Left ventricle myocardium inferior (tissue), 1 donor: ENCODE measurements at regions of chr5 and their contacts with region 1.

Region 1: GRCh38 chr5:79020861-79021561 is 35.9 kb upstream of the ARSB start:
- DNase-seq: peak; percentile 29
- H3K4me3 ChIP-seq: peak overlapping the region; percentile 34
- H3K27ac ChIP-seq: no peak overlapping the region
- H3K4me1 ChIP-seq: peaks cover 11% of the 10 kb centered on the region
- H3K27me3 ChIP-seq: peaks cover 6% of the 10 kb centered on the region
- CTCF ChIP-seq: peak; percentile 86

Region 2: GRCh38 chr5:78574731-78575161 is 446.3 kb before region 1 on chr5:
- intact Hi-C with region 1: no loop called
- DNase-seq: no peak
- H3K4me3 ChIP-seq: no peak overlapping the region
- H3K27ac ChIP-seq: peak overlapping the region; percentile 21
- H3K4me1 ChIP-seq: peaks cover 53% of the 10 kb centered on the region
- H3K27me3 ChIP-seq: no peaks in the 10 kb centered on the region
- CTCF ChIP-seq: no peak

Region 3: GRCh38 chr5:78896132-78896531 is 124.9 kb before region 1 on chr5:
- intact Hi-C with region 1: no loop called
- DNase-seq: no peak
- H3K4me3 ChIP-seq: no peak overlapping the region
- H3K27ac ChIP-seq: no peak overlapping the region
- H3K4me1 ChIP-seq: peaks cover 8% of the 10 kb centered on the region
- H3K27me3 ChIP-seq: no peaks in the 10 kb centered on the region
- CTCF ChIP-seq: no peak

Region 4: GRCh38 chr5:79109527-79110492 is 88.8 kb after region 1 on chr5:
- intact Hi-C with region 1: loop called (anchors 5 kb)
- DNase-seq: peak; percentile 23
- H3K4me3 ChIP-seq: no peak overlapping the region
- H3K27ac ChIP-seq: no peak overlapping the region
- H3K4me1 ChIP-seq: peaks cover 18% of the 10 kb centered on the region
- H3K27me3 ChIP-seq: peaks cover 91% of the 10 kb centered on the region
- CTCF ChIP-seq: peak; percentile 67

Region 5: GRCh38 chr5:79430196-79430595 is 409.2 kb after region 1 on chr5:
- intact Hi-C with region 1: no loop called
- DNase-seq: no peak
- H3K4me3 ChIP-seq: no peak overlapping the region
- H3K27ac ChIP-seq: no peak overlapping the region
- H3K4me1 ChIP-seq: no peaks in the 10 kb centered on the region
- H3K27me3 ChIP-seq: no peaks in the 10 kb centered on the region
- CTCF ChIP-seq: no peak

Region 6: DNA sequence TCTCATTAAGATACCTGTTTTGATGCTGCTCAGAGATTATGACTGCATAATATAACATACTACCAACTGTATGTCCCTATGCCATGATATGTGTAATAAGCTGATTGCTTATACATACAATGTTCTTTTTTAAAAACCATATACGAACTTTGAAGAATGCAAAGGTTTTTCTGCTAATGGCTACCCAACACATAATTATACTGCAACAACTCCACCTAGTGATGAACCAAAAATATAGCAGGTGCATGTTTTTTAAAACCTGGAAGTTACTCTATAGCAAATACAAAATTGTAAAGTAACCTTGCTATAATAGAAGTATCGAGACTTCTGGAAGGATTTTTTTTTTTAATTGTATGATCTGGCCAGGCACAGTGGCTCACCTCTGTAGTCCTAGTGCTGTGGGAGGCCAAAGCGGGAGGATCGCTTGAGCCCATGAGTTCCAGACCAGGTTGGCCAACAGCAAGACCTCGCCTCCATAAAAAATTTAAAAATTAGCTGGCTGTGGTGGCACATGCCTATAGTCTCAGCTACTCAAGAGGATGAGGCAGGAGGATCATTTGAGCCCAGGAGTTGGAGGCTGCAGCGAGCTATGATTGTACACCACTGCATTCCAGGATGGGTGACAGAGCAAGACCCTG is 443.8 kb after region 1 on chr5:
- intact Hi-C with region 1: loop called (anchors 10 kb)
- DNase-seq: no peak
- H3K4me3 ChIP-seq: no peak overlapping the region
- H3K27ac ChIP-seq: no peak overlapping the region
- H3K4me1 ChIP-seq: peaks cover 11% of the 10 kb centered on the region
- H3K27me3 ChIP-seq: no peaks in the 10 kb centered on the region
- CTCF ChIP-seq: peak; percentile 66